ENCODE measurements at regions of chr2 and their contacts with region 1.

Region 1: DNA sequence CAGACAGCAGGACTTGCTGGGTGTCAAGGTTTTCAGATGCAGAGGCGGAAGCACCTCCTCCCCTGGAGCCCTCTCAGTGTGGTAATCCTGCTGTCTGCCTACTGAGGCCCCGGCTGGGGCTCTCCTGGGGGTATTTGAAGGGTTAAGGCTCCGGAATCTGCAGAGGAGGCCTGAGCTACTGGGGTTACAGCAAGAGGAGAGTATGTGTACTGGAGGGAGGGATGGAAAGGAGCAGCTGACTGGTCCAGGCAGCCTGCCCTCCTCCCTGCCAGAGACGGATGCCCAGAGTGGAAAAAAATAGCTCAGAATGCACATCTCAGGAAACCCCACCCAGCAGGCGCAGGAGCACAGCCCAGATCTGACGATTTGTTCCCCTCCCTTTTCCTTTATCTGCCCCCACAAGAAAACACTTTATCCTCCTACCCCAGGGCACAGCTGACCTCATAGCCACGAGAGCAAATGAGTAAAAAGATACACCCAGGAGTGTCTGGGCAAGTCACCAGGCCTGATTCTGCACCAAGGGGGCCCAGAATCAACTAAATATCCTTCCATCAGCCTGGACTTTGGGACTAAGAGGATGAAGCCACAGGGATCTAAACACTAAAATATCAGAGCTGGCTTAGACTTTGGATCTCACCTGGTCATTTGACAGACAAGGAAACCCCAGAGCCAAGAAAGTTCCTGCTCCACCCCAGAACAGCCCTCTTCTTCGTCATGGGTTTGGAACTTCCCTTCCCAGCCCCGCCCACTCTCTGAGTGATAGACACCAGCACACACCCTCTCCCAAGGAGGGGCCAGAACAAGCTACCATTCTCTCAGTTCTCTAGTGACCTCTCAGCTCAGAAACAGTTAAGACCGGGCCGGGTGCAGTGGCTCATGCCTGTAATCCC is 5.5 kb downstream of the TMBIM1 start:
- DNase-seq: peak; percentile 87
- H3K4me3 Mint-ChIP-seq: peak overlapping the region; percentile 89
- H3K27ac Mint-ChIP-seq: peak overlapping the region; percentile 89
- H3K4me1 Mint-ChIP-seq: peaks cover 81% of the 10 kb centered on the region
- H3K27me3 Mint-ChIP-seq: no peaks in the 10 kb centered on the region

Region 2: DNA sequence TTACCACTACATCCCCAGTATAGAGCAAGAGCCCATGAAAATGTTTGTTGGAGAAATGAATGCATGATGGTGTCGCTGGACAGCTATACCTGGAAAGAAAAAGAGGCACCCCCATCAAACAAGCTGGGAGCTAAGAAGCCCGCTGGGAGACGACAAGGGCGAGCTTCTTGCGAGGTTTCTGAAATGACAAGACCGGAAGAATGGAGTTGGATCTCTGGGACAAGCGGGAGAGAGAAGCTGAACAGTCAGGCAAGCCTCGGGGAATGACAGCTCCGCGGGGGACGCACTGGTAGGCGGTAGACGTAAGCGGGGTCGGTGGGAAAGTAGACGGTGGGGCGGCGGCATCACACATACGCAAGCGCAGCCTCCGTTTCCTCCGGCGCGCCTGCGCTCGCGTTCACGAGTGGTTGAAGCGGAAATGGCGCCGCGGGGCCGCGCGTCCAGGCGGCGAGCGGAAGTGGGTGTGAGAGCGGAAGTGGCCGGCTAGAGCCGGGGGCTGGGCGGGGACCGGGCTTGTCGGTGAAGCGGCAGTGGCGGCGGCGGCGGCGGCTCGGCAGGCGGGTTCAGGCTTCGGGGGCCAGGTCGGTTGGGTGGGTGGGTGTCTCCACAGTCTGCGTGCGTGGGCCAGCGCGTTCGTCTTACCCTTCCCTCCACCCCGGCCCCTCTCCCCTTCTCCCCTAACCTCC is 70.0 kb before region 1 on chr2 and contains the start of gene ARPC2:
- CTCF ChIA-PET with region 1: interaction called, 3 read pairs
- POLR2A ChIA-PET with region 1: interaction called, 17 read pairs
- DNase-seq: peak; percentile 96
- H3K4me3 Mint-ChIP-seq: peak within 1 kb of the TSS; percentile 93
- H3K27ac Mint-ChIP-seq: peak within 1 kb of the TSS; percentile 92
- H3K4me1 Mint-ChIP-seq: peaks cover 41% of the 10 kb centered on the region
- H3K27me3 Mint-ChIP-seq: no peaks in the 10 kb centered on the region
- total RNA-seq, gene ARPC2: 765 to 778 TPM

Region 3: DNA sequence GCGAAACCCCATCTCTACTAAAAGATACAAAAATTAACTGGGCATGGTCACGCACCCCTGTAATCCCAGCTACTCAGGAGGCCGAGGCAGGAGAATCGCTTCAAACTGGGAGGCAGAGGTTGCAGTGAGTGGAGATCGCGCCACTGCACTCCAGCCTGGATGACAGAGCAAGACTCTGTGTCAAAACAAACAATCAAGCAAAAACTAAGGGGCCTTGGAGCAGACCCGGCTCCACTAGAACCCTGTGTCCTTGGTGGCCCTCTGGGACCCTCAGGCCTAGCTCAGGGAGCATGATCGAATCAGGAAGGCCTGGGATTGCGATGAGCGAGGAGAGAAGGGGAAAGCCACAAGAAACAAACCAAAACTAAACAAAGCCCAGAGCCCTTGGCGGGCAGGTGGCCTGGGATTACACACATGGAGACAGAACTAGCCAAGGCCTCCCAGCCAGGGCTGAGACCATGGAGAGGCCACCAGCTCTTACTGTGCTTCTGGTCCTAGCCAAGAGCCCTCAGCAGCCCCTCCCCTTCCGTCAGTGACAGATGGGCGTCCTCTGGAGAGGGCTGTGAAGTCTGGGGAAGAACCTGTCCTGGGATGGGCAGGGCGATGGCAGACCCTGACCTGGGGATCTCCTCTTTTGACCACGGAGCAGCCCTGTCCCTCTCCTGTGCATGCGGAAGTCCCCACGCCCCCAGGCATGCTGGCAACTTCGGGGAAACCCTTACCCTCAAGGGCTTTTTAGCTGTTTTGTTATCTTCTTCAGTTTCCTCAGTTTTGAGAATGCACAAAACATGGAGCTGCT is 42.4 kb after region 1 on chr2:
- CTCF ChIA-PET with region 1: no interaction called
- POLR2A ChIA-PET with region 1: no interaction called
- DNase-seq: no peak
- H3K4me3 Mint-ChIP-seq: no peak overlapping the region
- H3K27ac Mint-ChIP-seq: no peak overlapping the region
- H3K4me1 Mint-ChIP-seq: peaks cover 8% of the 10 kb centered on the region
- H3K27me3 Mint-ChIP-seq: peaks cover 11% of the 10 kb centered on the region